HepG2 (cell line): ENCODE measurements at regions of chr21 and their contacts with region 1.

Region 1: DNA sequence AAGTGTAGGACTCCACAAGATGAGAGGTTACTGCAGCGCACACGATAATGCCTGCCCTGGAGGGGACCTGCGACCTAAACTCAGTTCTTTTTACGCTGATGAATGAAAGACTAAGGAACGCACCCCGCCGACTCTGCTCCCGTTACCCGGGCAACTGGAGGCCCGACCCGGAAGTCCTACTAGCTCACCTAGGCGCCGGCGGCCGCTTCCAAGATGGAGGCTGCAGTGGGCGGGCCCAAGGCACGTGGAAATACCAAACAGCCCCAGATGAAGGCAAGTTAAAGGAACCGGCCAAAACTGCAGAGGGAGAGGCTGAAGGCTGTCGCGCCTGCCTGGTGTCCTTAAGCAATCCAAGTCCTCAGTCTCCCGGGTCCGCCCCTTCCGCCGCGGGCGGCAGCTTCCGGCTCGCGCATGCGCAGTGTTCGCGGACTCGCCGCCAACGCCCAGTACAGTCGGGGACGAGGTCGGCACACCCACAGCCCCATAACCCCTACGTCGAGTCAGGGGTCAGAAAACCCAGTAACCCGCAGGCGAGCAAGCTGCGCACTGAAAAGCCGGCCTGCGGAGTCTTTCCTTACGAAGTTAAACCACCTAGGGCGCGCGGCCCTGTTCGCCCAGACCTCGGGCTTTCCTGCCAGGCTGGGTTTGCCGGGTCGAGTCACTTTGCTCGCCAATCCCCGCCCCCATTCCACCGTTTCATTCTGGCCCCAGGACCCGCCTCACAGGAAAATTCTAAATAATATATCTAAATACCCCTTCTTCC is at the start of gene SETD4:
- DNase-seq: peak; percentile 85
- ATAC-seq: peak; percentile 93
- H3K4me3 ChIP-seq: peak within 1 kb of the TSS; percentile 80 to 96 (median 82)
- H3K27ac ChIP-seq: peak within 1 kb of the TSS; percentile 80
- H3K4me1 ChIP-seq: peaks cover 40% of the 10 kb centered on the region
- H3K27me3 ChIP-seq: no peaks in the 10 kb centered on the region
- CTCF ChIP-seq: peak; percentile 12; the same call in 1 of the 2 replicates
- EP300 ChIP-seq: no peak
- POLR2A ChIP-seq: peak; percentile 68 to 84
- RAD21 ChIP-seq: no peak
- total RNA-seq, gene SETD4: 11.9 and 14.4 TPM in 2 replicates

Region 2: DNA sequence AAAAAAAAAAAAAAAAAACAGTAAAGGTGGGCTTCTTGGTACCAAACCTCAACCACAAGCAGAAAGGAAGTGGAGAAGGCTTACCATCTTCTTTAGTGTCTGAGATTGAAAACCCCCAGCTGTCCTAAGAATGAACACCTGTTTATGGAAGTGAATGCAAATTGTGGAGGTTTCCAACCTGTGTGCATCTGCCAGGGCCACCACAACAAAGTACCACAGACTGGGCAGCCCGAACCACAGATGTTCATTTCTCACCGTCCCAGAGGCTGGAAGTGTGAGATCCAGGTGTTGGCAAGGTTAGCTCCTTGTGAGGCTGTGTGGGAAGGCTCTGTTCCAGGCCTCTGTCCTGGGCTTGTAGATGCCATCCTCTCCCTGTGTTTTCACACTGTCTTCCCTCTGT is 348.7 kb before region 1 on chr21:
- CTCF ChIA-PET with region 1: no interaction called
- POLR2A ChIA-PET with region 1: no interaction called
- in situ Hi-C with region 1: no loop called
- intact Hi-C with region 1: no loop called
- DNase-seq: no peak
- ATAC-seq: no peak
- H3K4me3 ChIP-seq: no peak overlapping the region
- H3K27ac ChIP-seq: no peak overlapping the region
- H3K4me1 ChIP-seq: no peaks in the 10 kb centered on the region
- H3K27me3 ChIP-seq: no peaks in the 10 kb centered on the region
- CTCF ChIP-seq: no peak
- EP300 ChIP-seq: no peak
- POLR2A ChIP-seq: no peak
- RAD21 ChIP-seq: no peak

Region 3: GRCh38 chr21:36113647-36114428 is 53.5 kb after region 1 on chr21:
- CTCF ChIA-PET with region 1: no interaction called
- POLR2A ChIA-PET with region 1: interaction called, 13 read pairs
- in situ Hi-C with region 1: no loop called
- intact Hi-C with region 1: loop called (anchors 5 kb)
- DNase-seq: peak; percentile 70
- ATAC-seq: peak; percentile 76
- H3K4me3 ChIP-seq: peak overlapping the region; percentile 62 to 75 (median 66); a peak in 5 of 6 replicates
- H3K27ac ChIP-seq: peak overlapping the region; percentile 68
- H3K4me1 ChIP-seq: peaks cover 14% of the 10 kb centered on the region
- H3K27me3 ChIP-seq: peaks cover 0 to 7% of the 10 kb centered on the region in 2 experiments; a peak in 2 of 5 replicates
- CTCF ChIP-seq: 0 out of 2 replicates have a peak, but pooled peaks have one; percentile 3
- EP300 ChIP-seq: no peak; a peak in 1 of 4 replicates
- POLR2A ChIP-seq: peak in 1 of 2 experiments; percentile 60; a peak in 1 of 4 replicates
- RAD21 ChIP-seq: no peak

Region 4: GRCh38 chr21:36337099-36337509 is 276.8 kb after region 1 on chr21:
- CTCF ChIA-PET with region 1: no interaction called
- POLR2A ChIA-PET with region 1: no interaction called
- in situ Hi-C with region 1: no loop called
- intact Hi-C with region 1: no loop called
- DNase-seq: no peak
- ATAC-seq: no peak
- H3K4me3 ChIP-seq: no peak overlapping the region
- H3K27ac ChIP-seq: no peak overlapping the region
- H3K4me1 ChIP-seq: no peaks in the 10 kb centered on the region
- H3K27me3 ChIP-seq: no peaks in the 10 kb centered on the region
- CTCF ChIP-seq: no peak
- EP300 ChIP-seq: no peak
- POLR2A ChIP-seq: no peak
- RAD21 ChIP-seq: no peak